Natural killer cell (primary cell): ENCODE measurements at regions of chr1 and their contacts with region 1.

Region 1: GRCh38 chr1:31422505-31423319 is 9.7 kb downstream of the SERINC2 start:
- DNase-seq: peak; percentile 52 to 77
- ATAC-seq: peak; percentile 76 to 91 (median 89)
- H3K4me3 ChIP-seq: no peak overlapping the region
- H3K4me3 Mint-ChIP-seq: no peak overlapping the region
- H3K27ac ChIP-seq: no peak overlapping the region
- H3K27ac Mint-ChIP-seq: no peak overlapping the region
- H3K4me1 ChIP-seq: no peaks in the 10 kb centered on the region
- H3K4me1 Mint-ChIP-seq: peaks cover 7 to 12% of the 10 kb centered on the region in 2 donors
- H3K27me3 ChIP-seq: no peaks in the 10 kb centered on the region
- H3K27me3 Mint-ChIP-seq: peaks cover 8 to 9% of the 10 kb centered on the region in 2 donors
- CTCF ChIP-seq: peak; percentile 88

Region 2: DNA sequence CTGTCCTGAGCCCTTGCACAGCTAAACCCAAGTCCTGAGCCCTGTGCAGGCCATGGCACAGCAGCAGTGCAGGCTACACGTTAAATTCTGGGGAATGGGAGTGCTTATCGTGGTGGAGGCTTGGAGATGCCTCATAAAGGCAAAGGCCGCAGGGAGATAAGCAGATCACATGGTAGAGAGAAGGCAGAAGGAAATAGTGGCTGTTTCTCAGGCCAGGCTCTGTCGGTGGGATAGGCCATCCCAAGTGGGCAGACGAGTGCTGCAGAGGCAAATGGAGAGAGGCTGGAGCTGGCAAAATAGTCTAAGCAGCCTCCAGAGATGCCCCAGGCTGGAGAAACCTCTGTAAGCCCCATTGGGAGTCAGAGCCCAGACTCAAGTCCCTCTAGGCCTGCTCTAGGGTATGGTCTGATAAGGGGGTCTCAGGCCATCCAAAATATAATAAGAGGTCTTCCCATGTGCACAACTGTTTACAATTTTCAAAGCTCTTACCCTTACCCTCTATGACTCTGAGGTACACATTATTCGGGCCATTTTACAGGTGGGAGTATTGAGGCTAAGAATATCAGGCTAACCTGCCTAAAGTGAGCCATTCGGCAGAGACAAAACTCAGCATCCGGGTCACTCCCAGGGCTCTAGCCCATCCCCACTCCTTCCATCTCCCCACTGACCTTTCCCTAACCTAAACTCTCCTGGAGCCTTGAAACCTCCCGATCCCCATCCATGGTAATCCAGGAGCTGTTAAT is 262.7 kb before region 1 on chr1:
- intact Hi-C with region 1: loop called (anchors 2 kb)
- DNase-seq: no peak
- ATAC-seq: no peak
- H3K4me3 ChIP-seq: no peak overlapping the region
- H3K4me3 Mint-ChIP-seq: no peak overlapping the region
- H3K27ac ChIP-seq: no peak overlapping the region
- H3K27ac Mint-ChIP-seq: no peak overlapping the region
- H3K4me1 ChIP-seq: peaks cover 11% of the 10 kb centered on the region
- H3K4me1 Mint-ChIP-seq: peaks cover 6 to 8% of the 10 kb centered on the region in 2 donors
- H3K27me3 ChIP-seq: no peaks in the 10 kb centered on the region
- H3K27me3 Mint-ChIP-seq: peaks cover 0 to 4% of the 10 kb centered on the region in 2 donors
- CTCF ChIP-seq: no peak

Region 3: GRCh38 chr1:31181515-31182343 is 241.0 kb before region 1 on chr1:
- intact Hi-C with region 1: loop called (anchors 1 kb)
- DNase-seq: peak; percentile 49 to 50
- ATAC-seq: peak; percentile 46 to 77 (median 74)
- H3K4me3 ChIP-seq: no peak overlapping the region
- H3K4me3 Mint-ChIP-seq: peak overlapping the region; percentile 42
- H3K27ac ChIP-seq: no peak overlapping the region
- H3K27ac Mint-ChIP-seq: no peak overlapping the region
- H3K4me1 ChIP-seq: peaks cover 11% of the 10 kb centered on the region
- H3K4me1 Mint-ChIP-seq: peaks cover 0 to 9% of the 10 kb centered on the region in 2 donors
- H3K27me3 ChIP-seq: peaks cover 5% of the 10 kb centered on the region
- H3K27me3 Mint-ChIP-seq: peaks cover 23 to 29% of the 10 kb centered on the region in 2 donors
- CTCF ChIP-seq: peak; percentile 68